ENCODE measurements at regions of chr3 and their contacts with region 1.

Region 1: DNA sequence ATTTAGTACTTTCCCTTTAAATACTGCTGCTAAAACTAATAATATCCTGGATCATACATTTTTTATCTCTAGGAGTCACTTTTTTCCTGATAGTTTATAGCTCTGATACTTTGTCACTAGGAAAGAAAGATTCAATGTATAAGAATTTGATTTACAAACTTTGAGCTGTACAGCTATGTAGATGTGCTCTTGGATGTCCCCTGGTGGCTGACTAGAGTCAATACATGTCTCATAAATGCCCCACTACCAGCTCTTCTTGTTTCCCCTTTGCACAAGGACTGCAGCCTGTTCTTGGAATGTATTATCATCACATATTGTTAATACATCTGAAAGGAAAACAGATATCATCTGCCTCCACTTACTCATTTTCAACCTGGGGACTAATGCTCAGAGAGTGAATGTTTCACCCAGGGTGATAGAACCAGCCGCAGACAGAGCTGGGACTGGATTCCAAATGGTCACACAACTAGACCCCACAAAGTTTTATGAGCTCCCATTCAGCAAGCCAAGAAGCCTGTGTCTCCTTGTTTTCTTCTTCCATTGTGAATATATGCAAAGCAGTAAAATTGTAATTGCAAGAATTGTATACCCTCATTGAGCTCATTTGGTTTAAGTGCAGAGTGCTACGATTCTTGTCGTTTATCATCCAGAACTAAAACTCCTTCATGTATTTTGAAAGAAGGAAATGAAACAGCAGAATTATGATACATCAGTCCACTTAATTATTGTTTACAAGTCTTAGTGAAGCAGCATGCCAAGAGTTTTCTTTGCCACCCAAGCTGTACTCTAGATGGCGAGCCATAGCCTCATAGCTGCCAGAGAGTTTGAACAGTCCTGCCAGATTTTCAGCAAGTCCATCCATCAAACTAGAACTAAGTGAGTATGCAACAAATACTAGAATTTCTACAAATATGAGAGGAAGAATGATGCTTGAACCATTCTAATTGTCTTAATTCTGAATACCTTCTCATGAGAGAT is 261.6 kb upstream of the LMCD1 start:
- DNase-seq: no peak
- H3K4me3 ChIP-seq: no peak overlapping the region
- H3K27me3 ChIP-seq: no peaks in the 10 kb centered on the region
- CTCF ChIP-seq: peak; percentile 94

Region 2: GRCh38 chr3:8220291-8220690 is 19.7 kb before region 1 on chr3:
- CTCF ChIA-PET with region 1: interaction called, 19 read pairs
- POLR2A ChIA-PET with region 1: no interaction called
- DNase-seq: no peak
- H3K4me3 ChIP-seq: no peak overlapping the region
- H3K27me3 ChIP-seq: no peaks in the 10 kb centered on the region
- CTCF ChIP-seq: no peak